PC-9 (cell line): ENCODE measurements at regions of chr1 and their contacts with region 1.

Region 1: GRCh38 chr1:7930645-7931445 is 9.8 kb downstream of the TNFRSF9 start:
- DNase-seq: no peak
- H3K4me3 ChIP-seq: no peak overlapping the region
- H3K27ac ChIP-seq: no peak overlapping the region
- H3K4me1 ChIP-seq: no peaks in the 10 kb centered on the region
- H3K27me3 ChIP-seq: no peaks in the 10 kb centered on the region
- CTCF ChIP-seq: no peak

Region 2: DNA sequence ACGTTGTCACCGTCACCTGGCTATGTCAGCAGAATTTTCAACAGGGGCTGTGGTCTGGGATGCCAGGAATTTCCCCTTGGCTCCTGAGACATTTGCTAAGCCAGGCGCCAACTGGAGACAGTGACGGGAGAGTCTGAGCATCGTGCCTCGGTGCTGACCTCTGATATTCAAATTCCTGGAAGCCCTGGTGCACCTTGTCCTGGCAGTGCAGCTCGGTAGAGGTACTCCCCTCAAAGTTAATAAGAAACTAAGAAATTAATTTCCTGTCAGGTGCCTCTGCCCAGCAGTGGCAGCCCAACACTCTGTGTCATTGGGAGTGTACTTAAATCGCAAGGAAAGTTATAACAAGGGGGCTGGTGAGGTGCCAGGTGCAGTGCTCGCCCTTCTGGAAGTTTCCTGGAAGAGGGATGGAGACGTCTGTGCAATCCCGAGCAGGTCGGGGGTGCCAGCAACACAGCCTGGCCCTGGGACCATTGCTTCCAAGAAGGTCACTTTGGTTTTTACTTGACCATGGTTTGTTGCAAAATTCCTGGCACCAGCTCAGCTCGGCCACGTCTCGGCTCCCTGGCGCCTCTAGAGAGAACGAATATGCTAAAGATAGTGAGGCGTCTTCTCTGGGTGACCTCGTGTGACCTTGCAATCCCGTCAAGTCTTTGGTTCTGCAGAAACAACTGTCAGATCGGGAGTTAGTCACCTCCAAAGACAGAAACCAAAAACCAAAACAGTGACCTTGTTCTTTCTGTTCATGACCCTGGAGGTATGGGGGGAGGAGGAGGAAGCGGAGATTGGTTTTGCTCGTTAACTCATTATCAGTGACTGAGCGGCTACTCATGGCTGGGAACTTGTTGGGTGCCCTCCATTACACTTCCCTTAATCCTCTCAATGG is 309.3 kb before region 1 on chr1:
- CTCF ChIA-PET with region 1: no interaction called
- POLR2A ChIA-PET with region 1: no interaction called
- intact Hi-C with region 1: no loop called
- DNase-seq: no peak
- H3K4me3 ChIP-seq: no peak overlapping the region
- H3K27ac ChIP-seq: no peak overlapping the region
- H3K4me1 ChIP-seq: no peaks in the 10 kb centered on the region
- H3K27me3 ChIP-seq: peaks cover 50% of the 10 kb centered on the region
- CTCF ChIP-seq: no peak

Region 3: GRCh38 chr1:7824701-7825100 is 106.1 kb before region 1 on chr1:
- CTCF ChIA-PET with region 1: no interaction called
- POLR2A ChIA-PET with region 1: interaction called, 15 read pairs
- intact Hi-C with region 1: no loop called
- DNase-seq: no peak
- H3K4me3 ChIP-seq: no peak overlapping the region
- H3K27ac ChIP-seq: no peak overlapping the region
- H3K4me1 ChIP-seq: no peaks in the 10 kb centered on the region
- H3K27me3 ChIP-seq: no peaks in the 10 kb centered on the region
- CTCF ChIP-seq: no peak

Region 4: DNA sequence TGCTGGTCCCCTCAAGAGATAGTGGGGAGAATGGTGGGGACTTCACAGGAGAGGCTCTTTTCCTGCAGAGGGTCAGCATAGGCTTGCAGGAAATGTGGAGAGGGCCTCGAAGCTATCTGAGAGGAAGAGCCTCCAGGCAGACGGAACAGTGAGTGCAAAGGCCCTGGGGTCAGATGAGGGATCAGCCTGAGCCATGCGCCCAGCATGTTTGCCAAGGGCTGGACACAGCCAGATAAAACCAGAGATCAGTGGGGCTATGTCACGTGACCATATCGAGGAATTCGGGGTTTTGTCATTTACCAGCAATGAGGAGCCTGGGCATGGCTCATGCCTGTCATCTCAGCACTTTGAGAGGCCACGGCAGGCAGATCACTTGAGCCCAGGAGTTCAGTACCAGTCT is 71.4 kb before region 1 on chr1:
- CTCF ChIA-PET with region 1: no interaction called
- POLR2A ChIA-PET with region 1: no interaction called
- intact Hi-C with region 1: no loop called
- DNase-seq: no peak
- H3K4me3 ChIP-seq: no peak overlapping the region
- H3K27ac ChIP-seq: no peak overlapping the region
- H3K4me1 ChIP-seq: no peaks in the 10 kb centered on the region
- H3K27me3 ChIP-seq: no peaks in the 10 kb centered on the region
- CTCF ChIP-seq: no peak